ENCODE measurements at regions of chr3 and their contacts with region 1.

Region 1: DNA sequence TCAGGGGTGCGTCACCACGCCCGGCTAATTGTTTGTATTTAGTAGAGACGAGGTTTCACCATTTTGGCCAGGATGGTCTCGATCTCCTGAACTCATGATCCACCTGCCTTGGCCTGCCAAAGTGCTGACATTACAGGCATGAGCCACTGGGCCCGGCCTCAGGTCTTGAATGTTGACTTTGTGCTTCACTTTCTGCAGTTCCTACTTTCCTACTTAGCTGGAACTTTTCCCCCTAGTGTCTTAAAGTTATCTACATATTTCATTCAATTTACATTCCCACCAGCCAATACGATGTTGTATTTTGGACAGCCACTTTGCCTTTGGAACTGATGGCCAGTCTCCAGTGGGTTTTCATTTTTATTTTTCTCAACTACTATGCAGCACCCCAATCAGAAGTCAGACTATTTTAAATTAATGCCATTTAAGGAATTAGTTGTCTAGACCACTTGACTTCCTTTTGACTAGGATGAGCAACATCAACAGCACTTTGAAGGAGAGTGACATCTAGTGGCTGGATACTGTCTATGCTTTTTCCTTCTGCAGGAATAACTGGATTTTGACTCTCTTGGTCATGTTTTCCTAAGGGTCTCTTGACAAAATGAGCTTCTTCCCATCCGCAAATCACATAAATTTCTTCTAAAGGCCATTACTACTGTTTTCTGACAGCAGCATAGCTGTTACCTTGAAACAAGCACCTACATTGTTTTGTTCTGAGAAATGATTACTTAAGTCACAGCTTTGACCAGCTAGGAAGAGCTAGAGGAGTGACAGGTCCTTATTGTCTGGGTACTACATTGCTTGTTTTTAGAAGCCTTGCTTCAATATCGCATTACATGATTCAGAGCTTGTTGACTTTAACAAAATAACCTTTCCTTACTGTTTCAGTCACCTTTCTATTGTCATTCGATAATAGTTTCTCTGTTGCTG is 140.2 kb downstream of the ITPR1 start:
- DNase-seq: peak; percentile 66
- H3K4me3 ChIP-seq: no peak overlapping the region; a peak in 1 of 4 replicates
- H3K27ac ChIP-seq: no peak overlapping the region
- H3K4me1 ChIP-seq: no peaks in the 10 kb centered on the region
- H3K27me3 ChIP-seq: no peaks in the 10 kb centered on the region
- CTCF ChIP-seq: peak; percentile 94
- EP300 ChIP-seq: no peak
- RAD21 ChIP-seq: peak; percentile 96

Region 2: GRCh38 chr3:4340411-4341335 is 292.7 kb before region 1 on chr3:
- CTCF ChIA-PET with region 1: interaction called, 28 read pairs
- POLR2A ChIA-PET with region 1: no interaction called
- DNase-seq: no peak
- H3K4me3 ChIP-seq: no peak overlapping the region
- H3K27ac ChIP-seq: no peak overlapping the region
- H3K4me1 ChIP-seq: peaks cover 5% of the 10 kb centered on the region in 2 experiments; a peak in 2 of 4 replicates
- H3K27me3 ChIP-seq: no peaks in the 10 kb centered on the region
- CTCF ChIP-seq: no peak
- EP300 ChIP-seq: no peak
- RAD21 ChIP-seq: no peak

Region 3: GRCh38 chr3:4359805-4360502 is 273.4 kb before region 1 on chr3:
- CTCF ChIA-PET with region 1: interaction called, 14 read pairs
- POLR2A ChIA-PET with region 1: no interaction called
- DNase-seq: no peak
- H3K4me3 ChIP-seq: no peak overlapping the region
- H3K27ac ChIP-seq: no peak overlapping the region
- H3K4me1 ChIP-seq: peaks cover 0 to 19% of the 10 kb centered on the region in 2 experiments; a peak in 2 of 4 replicates
- H3K27me3 ChIP-seq: no peaks in the 10 kb centered on the region
- CTCF ChIP-seq: no peak
- EP300 ChIP-seq: no peak
- RAD21 ChIP-seq: no peak

Region 4: GRCh38 chr3:4493014-4493940 is 140.1 kb before region 1 on chr3 and contains the start of gene ITPR1:
- CTCF ChIA-PET with region 1: interaction called, 29 read pairs
- POLR2A ChIA-PET with region 1: interaction called, 4 read pairs
- DNase-seq: peak; percentile 96
- H3K4me3 ChIP-seq: peak within 1 kb of the TSS; percentile 92 to 96
- H3K27ac ChIP-seq: peak within 1 kb of the TSS; percentile 39 to 92; a peak in 3 of 4 replicates
- H3K4me1 ChIP-seq: peaks cover 0 to 21% of the 10 kb centered on the region in 2 experiments; a peak in 2 of 4 replicates
- H3K27me3 ChIP-seq: no peaks in the 10 kb centered on the region
- CTCF ChIP-seq: no peak
- EP300 ChIP-seq: 0 out of 4 replicates have a peak, but pooled peaks of 1 of the 2 experiments have one; percentile 7
- RAD21 ChIP-seq: peak; percentile 44
- polyA plus RNA-seq, gene ITPR1: 5.9 and 8.0 TPM in 2 replicates

Region 5: GRCh38 chr3:4512895-4513616 is 120.3 kb before region 1 on chr3:
- CTCF ChIA-PET with region 1: interaction called, 17 read pairs
- POLR2A ChIA-PET with region 1: no interaction called
- DNase-seq: peak; percentile 51
- H3K4me3 ChIP-seq: no peak overlapping the region
- H3K27ac ChIP-seq: peak overlapping the region in 1 of 2 experiments; percentile 89; a peak in 2 of 4 replicates
- H3K4me1 ChIP-seq: peaks cover 0 to 45% of the 10 kb centered on the region in 2 experiments; a peak in 2 of 4 replicates
- H3K27me3 ChIP-seq: no peaks in the 10 kb centered on the region
- CTCF ChIP-seq: no peak
- EP300 ChIP-seq: no peak
- RAD21 ChIP-seq: no peak

Region 6: DNA sequence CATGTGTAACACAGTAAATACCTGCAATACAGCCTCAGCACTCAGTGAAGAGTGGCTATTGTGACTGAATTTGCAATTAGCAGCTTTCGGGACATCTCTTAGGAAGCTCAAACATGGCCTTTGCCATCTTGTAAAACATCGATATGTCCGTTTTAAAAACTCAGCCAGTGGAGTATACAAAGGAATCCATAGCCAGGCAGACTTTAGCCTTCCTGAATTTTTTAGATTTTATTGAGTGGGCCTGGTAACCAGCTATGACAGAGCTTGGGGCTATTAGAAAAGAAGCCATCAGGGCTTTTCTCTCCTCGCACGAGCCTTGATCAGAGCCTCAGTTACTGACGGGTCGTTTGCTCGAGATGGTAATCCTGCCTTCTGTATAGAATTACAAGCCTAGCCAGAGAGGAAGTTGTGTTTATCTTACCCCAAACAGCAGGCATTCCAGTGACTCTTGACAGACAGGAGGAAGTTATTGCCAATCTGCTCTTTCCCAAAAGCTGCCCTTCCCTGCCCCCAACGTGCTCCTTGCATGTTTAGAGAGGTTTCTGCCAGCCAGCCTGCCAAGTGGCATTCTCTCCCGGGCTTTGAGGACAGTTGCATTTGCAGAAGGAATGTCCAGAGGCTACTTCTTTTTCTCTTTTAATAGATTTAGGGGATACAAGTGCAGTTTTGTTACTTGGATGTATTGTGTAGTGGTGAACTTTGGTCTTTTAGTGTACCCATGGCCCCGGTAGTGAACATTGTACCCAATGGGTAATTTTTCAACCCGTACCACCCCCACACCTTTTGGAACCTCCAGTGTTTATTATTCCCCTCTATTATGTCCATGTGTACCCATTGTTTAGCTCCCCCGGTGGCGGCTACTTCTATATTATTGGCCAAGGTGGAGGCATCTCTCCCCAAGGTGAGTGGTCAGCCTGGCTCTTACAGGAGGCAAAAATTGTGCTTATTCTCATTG is 99.6 kb before region 1 on chr3:
- CTCF ChIA-PET with region 1: interaction called, 17 read pairs
- POLR2A ChIA-PET with region 1: no interaction called
- DNase-seq: no peak
- H3K4me3 ChIP-seq: no peak overlapping the region
- H3K27ac ChIP-seq: peak overlapping the region in 1 of 2 experiments; percentile 71; a peak in 1 of 4 replicates
- H3K4me1 ChIP-seq: peaks cover 0 to 38% of the 10 kb centered on the region in 2 experiments; a peak in 2 of 4 replicates
- H3K27me3 ChIP-seq: no peaks in the 10 kb centered on the region
- CTCF ChIP-seq: no peak
- EP300 ChIP-seq: no peak
- RAD21 ChIP-seq: no peak

Region 7: DNA sequence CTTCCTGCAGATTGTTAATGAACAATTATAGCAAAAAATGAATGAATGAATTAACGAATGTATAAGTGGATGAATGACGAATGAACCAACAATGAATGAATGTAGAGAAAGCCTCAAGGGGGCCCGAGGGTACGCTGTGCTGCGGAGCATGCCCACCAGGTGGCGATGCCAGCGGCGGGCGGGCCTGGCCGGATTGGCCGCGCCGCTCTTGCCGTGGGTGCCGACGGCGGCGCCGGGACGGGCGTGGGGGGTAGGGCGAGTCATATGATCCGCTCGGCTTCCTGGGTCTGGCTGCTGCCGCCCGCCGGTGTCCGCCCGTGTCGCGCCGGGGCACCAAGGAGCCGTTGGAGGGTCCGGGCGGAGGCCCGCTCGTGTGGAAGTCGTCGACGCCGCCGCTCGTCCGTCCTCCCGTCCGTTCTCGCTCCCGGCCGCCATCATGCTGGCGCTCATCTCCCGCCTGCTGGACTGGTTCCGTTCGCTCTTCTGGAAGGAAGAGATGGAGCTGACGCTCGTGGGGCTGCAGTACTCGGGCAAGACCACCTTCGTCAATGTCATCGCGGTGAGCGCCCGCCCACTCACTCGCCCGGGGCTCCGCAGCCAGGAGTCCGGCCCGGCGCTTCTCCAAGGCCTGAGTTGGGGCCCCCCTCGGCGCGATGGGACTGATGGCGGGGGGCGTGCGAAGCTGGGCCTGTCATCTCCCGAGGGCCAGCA is 488.8 kb after region 1 on chr3 and contains the start of gene ARL8B:
- CTCF ChIA-PET with region 1: no interaction called
- POLR2A ChIA-PET with region 1: no interaction called
- DNase-seq: peak; percentile 97
- H3K4me3 ChIP-seq: peak within 1 kb of the TSS; percentile 96 to 100
- H3K27ac ChIP-seq: peak within 1 kb of the TSS; percentile 79 to 84
- H3K4me1 ChIP-seq: peaks cover 7 to 8% of the 10 kb centered on the region in 2 experiments; a peak in 3 of 4 replicates
- H3K27me3 ChIP-seq: no peaks in the 10 kb centered on the region
- CTCF ChIP-seq: peak; percentile 96
- EP300 ChIP-seq: peak; percentile 36 to 37; a peak in 2 of 4 replicates
- RAD21 ChIP-seq: peak; percentile 52
- polyA plus RNA-seq, gene ARL8B: 16.2 and 21.9 TPM in 2 replicates